Esophagus muscularis mucosa (tissue), 4 donors: ENCODE measurements at regions of chr18 and their contacts with region 1.

Region 1: GRCh38 chr18:62131301-62131909 is 55.5 kb downstream of the PIGN start:
- DNase-seq: no peak
- H3K4me3 ChIP-seq: no peak overlapping the region
- H3K27ac ChIP-seq: no peak overlapping the region
- H3K4me1 ChIP-seq: no peaks in the 10 kb centered on the region
- H3K27me3 ChIP-seq: no peaks in the 10 kb centered on the region
- CTCF ChIP-seq: peak; percentile 79 to 94 (median 87)
- EP300 ChIP-seq: no peak
- POLR2A ChIP-seq: no peak

Region 2: DNA sequence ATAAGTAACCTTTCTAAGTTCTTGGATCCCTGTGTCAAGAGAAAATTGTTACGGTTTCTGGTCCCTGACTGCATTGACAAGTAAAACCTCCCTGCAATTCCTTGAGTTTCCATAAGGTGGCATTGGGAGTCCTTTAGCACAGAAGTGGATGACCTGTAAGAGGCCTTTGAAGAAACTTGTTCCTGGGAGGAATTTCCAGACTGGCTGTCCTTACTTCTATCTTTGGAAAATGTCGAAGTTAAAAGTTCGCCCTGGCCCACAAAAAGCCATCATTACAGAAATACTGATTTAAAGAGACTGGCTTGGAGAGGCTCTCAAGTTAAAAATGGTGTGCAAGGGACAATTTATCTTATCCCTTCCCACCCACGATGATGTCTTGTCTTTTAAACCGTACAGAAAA is 579.8 kb before region 1 on chr18:
- intact Hi-C with region 1: loop called (anchors 5 kb)
- DNase-seq: peak; percentile 79
- H3K4me3 ChIP-seq: no peak overlapping the region
- H3K27ac ChIP-seq: no peak overlapping the region
- H3K4me1 ChIP-seq: no peaks in the 10 kb centered on the region
- H3K27me3 ChIP-seq: peaks cover 0 to 6% (median 0%) of the 10 kb centered on the region in 4 donors
- CTCF ChIP-seq: peak; percentile 69 to 88 (median 70)
- EP300 ChIP-seq: no peak
- POLR2A ChIP-seq: no peak

Region 3: GRCh38 chr18:61581578-61582201 is 549.7 kb before region 1 on chr18:
- intact Hi-C with region 1: loop called (anchors 10 kb)
- DNase-seq: peak; percentile 94
- H3K4me3 ChIP-seq: peak overlapping the region; percentile 38 to 56 (median 44)
- H3K27ac ChIP-seq: peak overlapping the region; percentile 38 to 62 (median 54)
- H3K4me1 ChIP-seq: peaks cover 8 to 15% (median 13%) of the 10 kb centered on the region in 4 donors
- H3K27me3 ChIP-seq: peaks cover 0 to 10% (median 0%) of the 10 kb centered on the region in 4 donors
- CTCF ChIP-seq: peak; percentile 83 to 98 (median 96)
- EP300 ChIP-seq: no peak
- POLR2A ChIP-seq: no peak

Region 4: DNA sequence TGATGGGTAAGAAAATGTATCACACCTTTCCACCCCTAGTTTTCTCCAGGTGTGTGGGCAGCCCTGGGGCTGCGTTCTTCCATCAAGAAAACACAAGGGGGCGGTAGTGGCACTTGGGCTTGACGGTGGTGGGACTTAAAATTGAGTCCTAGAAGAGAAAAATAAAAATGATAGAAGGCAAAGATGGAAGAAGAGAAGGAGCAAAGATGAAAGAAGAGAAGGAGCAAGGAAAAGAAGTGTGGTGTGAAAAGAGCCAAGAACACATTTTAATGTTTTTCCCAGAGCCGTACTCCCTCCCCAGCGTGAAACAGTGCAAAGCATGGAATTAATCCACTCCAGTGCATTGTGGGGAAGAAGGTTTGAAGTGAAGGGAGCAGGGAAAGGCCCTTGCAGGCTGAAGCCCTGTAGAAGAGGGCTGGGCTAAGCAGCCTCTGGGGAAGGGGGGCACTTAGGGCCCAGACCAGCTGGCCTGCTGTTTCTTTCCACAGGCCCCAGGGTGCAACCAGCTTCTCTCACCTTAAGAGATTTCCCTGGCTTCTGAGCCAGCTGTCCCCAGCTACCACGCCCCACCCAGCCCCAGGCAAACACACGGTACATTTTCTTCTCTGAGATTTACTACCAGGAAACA is 495.4 kb before region 1 on chr18:
- intact Hi-C with region 1: loop called (anchors 5 kb)
- DNase-seq: no peak
- H3K4me3 ChIP-seq: no peak overlapping the region
- H3K27ac ChIP-seq: no peak overlapping the region
- H3K4me1 ChIP-seq: peaks cover 0 to 5% (median 4%) of the 10 kb centered on the region in 4 donors
- H3K27me3 ChIP-seq: no peaks in the 10 kb centered on the region
- CTCF ChIP-seq: peak in 2 of 3 experiments; percentile 49 to 69
- EP300 ChIP-seq: no peak
- POLR2A ChIP-seq: no peak

Region 5: GRCh38 chr18:61901323-61901986 is 229.9 kb before region 1 on chr18:
- intact Hi-C with region 1: loop called (anchors 10 kb)
- DNase-seq: peak; percentile 89
- H3K4me3 ChIP-seq: no peak overlapping the region
- H3K27ac ChIP-seq: no peak overlapping the region
- H3K4me1 ChIP-seq: peaks cover 0 to 6% (median 1%) of the 10 kb centered on the region in 4 donors
- H3K27me3 ChIP-seq: no peaks in the 10 kb centered on the region
- CTCF ChIP-seq: peak; percentile 66 to 94 (median 76)
- EP300 ChIP-seq: no peak
- POLR2A ChIP-seq: no peak

Region 6: DNA sequence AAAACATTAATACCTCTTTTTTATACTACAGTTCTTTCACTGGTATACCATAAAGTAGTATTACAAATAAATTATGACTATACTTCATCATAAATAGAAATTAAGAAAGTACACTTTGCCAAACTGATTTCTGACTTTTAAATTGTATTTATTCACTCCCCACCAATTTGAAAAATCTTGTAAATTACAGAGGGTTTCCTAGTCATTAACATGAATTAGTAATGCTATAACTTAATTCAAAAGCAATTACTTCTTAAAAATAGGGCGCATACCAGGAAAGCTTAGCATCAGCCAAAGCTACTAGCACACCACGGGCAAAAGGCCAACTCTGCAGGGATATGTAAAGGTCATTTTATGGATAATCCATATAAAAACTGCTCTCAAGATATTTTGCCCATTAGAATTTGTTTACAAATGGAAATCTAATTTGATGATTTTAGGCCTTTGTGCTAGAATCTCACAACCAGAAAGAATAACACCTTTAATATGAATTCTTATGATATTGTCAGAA is 86.9 kb before region 1 on chr18:
- intact Hi-C with region 1: no loop called
- DNase-seq: no peak
- H3K4me3 ChIP-seq: no peak overlapping the region
- H3K27ac ChIP-seq: no peak overlapping the region
- H3K4me1 ChIP-seq: no peaks in the 10 kb centered on the region
- H3K27me3 ChIP-seq: no peaks in the 10 kb centered on the region
- CTCF ChIP-seq: no peak
- EP300 ChIP-seq: no peak
- POLR2A ChIP-seq: no peak